Endothelial cell of umbilical vein (primary cell): ENCODE measurements at regions of chr1 and their contacts with region 1.

Region 1: DNA sequence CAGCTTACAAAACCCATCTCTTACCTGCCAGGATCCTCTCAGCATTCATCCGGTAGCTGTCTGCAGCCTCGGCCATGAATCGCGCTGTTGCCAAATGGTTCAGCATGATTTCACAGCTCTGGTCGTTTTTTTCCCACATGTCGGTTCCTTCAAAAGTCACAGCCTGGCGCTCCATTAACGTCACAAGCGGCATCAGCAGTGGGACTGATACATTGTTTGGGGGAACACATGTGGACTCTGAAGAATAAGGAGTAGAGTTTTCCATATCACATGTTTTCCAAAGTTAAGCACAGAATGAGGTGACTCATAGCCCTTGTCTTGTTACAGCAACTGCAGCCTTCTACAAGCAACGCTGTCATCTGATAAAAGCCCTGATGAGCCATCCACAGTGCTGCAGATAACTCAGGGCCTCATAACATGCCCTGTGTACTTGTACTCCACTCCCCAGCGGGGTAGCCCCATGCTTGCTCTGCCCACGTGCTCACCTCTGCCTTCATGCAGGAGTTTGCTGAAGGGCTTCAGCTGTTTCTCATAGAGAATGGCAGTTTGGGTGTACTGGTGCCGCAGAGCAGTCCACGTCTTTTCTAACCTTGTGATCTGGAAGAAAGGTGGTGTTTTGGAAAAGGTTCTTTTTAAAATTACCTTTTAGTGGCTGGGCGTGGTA is 114.2 kb downstream of the BCAR3 start:
- DNase-seq: peak; percentile 81
- H3K4me3 ChIP-seq: no peak overlapping the region
- H3K27ac ChIP-seq: peak overlapping the region; percentile 34
- H3K4me1 ChIP-seq: peaks cover 24% of the 10 kb centered on the region
- H3K27me3 ChIP-seq: no peaks in the 10 kb centered on the region
- CTCF ChIP-seq: no peak
- POLR2A ChIP-seq: no peak

Region 2: GRCh38 chr1:93607814-93608186 is 40.4 kb after region 1 on chr1:
- CTCF ChIA-PET with region 1: no interaction called
- POLR2A ChIA-PET with region 1: no interaction called
- dilution Hi-C with region 1: no loop called
- intact Hi-C with region 1: loop called (anchors 2 kb)
- DNase-seq: no peak
- H3K4me3 ChIP-seq: no peak overlapping the region
- H3K27ac ChIP-seq: no peak overlapping the region
- H3K4me1 ChIP-seq: peaks cover 42% of the 10 kb centered on the region
- H3K27me3 ChIP-seq: no peaks in the 10 kb centered on the region
- CTCF ChIP-seq: no peak
- POLR2A ChIP-seq: no peak

Region 3: DNA sequence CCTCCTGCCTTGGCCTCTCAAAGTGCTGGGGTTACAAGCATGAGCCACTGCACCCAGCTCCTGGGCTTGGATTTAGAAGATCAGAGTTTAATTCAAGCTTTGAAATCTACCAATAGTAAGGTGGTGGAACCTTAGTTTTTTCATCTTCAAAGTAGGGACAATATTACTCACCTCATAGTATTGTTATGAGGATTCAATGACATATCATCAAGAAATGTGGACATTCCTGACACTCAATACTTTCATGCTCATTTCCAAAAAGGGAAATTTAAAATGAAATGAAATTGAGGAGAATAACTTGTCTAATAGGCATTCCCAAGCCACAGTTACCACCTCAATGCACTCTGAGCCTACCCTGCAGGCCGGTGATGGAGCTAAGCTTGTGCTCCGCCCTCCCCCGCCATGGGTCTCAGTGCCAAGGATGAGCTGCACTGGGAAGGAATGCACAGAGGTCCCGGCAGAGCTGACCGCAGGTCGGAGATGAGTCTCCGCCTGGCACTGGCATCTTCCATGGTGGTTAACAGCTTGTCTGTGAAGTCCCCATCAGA is 170.8 kb after region 1 on chr1:
- CTCF ChIA-PET with region 1: no interaction called
- POLR2A ChIA-PET with region 1: no interaction called
- dilution Hi-C with region 1: no loop called
- intact Hi-C with region 1: no loop called
- DNase-seq: no peak
- H3K4me3 ChIP-seq: no peak overlapping the region
- H3K27ac ChIP-seq: no peak overlapping the region
- H3K4me1 ChIP-seq: no peaks in the 10 kb centered on the region
- H3K27me3 ChIP-seq: no peaks in the 10 kb centered on the region
- CTCF ChIP-seq: no peak
- POLR2A ChIP-seq: no peak